Lower leg skin (tissue), 4 donors: ENCODE measurements at regions of chr11 and their contacts with region 1.

Region 1: DNA sequence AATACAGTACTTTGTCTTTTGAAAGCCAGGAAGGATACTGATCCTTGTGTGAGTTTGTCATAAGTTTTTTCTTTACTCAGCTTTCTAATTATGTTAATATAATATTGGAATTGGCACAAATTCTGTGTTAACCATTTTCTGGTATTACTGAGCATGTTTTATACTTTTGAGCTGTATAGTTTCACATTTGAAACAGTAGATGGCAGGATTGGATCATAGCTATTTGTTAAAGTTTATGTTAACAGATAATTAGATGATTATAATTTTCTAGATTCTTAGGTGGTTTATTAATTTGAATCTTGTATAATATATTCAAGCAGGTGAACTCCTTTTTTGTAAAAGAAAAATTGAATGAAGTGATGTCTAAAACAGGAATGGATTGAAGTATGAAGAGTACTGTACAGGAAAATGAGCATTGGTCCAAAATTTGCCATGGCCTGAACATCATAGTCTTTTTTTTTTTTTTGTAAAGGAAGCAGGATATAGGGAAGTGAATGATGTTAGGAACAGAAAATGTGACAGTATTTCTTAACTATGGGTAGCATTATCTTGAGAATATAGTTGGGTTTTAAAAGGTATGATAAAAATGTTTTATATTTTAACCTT is 102.0 kb downstream of the CYP2R1 start:
- DNase-seq: no peak
- H3K4me3 ChIP-seq: no peak overlapping the region
- CTCF ChIP-seq: no peak
- POLR2A ChIP-seq: no peak

Region 2: DNA sequence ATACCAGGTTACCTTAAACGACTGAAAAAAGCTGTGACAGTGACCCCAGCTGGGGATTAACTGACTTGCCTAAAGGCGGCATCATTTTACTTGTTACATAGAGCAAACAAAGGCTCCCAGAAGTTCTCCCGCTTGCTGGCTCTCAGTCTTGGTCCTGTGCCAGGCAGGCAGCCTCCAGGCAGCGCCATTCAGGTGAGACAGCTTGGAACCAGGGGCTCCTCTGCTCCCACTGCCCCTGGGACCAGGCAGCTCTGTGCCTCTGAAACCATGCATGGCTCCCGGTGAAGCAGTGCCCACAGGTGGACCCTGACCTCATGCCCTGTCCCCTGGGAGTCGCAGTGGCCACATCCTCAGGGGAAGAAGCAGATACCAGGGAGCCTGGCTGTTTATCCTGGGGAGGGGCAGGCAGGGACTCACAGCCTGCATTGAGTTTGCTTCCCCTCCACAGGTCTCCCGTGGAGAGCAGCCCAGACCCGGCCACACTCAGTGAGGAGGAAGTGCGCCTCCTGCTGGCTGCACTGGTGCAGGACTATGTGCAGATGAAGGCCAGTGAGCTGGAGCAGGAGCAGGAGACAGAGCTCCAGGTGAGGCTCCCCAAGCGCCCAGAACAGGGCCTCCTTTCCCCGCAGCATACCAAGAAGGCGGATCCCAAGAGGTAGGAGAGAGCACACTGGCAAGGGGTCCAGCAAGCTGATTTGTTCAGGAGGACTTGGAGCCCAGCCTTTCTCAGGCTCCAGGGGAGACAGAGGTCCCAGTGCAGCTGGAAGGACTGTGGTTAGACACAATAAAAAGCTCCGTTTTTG is 117.6 kb after region 1 on chr11:
- intact Hi-C with region 1: loop called (anchors 5 kb)
- DNase-seq: peak; percentile 61 to 94
- H3K4me3 ChIP-seq: no peak overlapping the region
- CTCF ChIP-seq: no peak
- POLR2A ChIP-seq: no peak